ENCODE measurements at regions of chr2 and their contacts with region 1.

Region 1: GRCh38 chr2:234422273-234422767 is 74.6 kb downstream of the ARL4C start:
- DNase-seq: peak; percentile 95
- ATAC-seq: peak; percentile 88
- H3K4me3 ChIP-seq: no peak overlapping the region
- H3K27ac ChIP-seq: peak overlapping the region; percentile 58; the same call in 1 of the 2 replicates
- H3K4me1 ChIP-seq: peaks cover 21% of the 10 kb centered on the region
- H3K27me3 ChIP-seq: no peaks in the 10 kb centered on the region
- CTCF ChIP-seq: no peak
- POLR2A ChIP-seq: no peak
- RAD21 ChIP-seq: 0 out of 2 replicates have a peak, but pooled peaks have one; percentile 17

Region 2: GRCh38 chr2:234377761-234378391 is 44.4 kb before region 1 on chr2:
- CTCF ChIA-PET with region 1: no interaction called
- POLR2A ChIA-PET with region 1: no interaction called
- dilution Hi-C with region 1: no loop called
- in situ Hi-C with region 1: no loop called
- intact Hi-C with region 1: no loop called
- DNase-seq: peak; percentile 74
- ATAC-seq: peak; percentile 76
- H3K4me3 ChIP-seq: no peak overlapping the region
- H3K27ac ChIP-seq: peak overlapping the region; percentile 81; the same call in 1 of the 2 replicates
- H3K4me1 ChIP-seq: peaks cover 4% of the 10 kb centered on the region; the same call in 1 of the 2 replicates
- H3K27me3 ChIP-seq: no peaks in the 10 kb centered on the region
- CTCF ChIP-seq: no peak
- POLR2A ChIP-seq: no peak
- RAD21 ChIP-seq: no peak

Region 3: DNA sequence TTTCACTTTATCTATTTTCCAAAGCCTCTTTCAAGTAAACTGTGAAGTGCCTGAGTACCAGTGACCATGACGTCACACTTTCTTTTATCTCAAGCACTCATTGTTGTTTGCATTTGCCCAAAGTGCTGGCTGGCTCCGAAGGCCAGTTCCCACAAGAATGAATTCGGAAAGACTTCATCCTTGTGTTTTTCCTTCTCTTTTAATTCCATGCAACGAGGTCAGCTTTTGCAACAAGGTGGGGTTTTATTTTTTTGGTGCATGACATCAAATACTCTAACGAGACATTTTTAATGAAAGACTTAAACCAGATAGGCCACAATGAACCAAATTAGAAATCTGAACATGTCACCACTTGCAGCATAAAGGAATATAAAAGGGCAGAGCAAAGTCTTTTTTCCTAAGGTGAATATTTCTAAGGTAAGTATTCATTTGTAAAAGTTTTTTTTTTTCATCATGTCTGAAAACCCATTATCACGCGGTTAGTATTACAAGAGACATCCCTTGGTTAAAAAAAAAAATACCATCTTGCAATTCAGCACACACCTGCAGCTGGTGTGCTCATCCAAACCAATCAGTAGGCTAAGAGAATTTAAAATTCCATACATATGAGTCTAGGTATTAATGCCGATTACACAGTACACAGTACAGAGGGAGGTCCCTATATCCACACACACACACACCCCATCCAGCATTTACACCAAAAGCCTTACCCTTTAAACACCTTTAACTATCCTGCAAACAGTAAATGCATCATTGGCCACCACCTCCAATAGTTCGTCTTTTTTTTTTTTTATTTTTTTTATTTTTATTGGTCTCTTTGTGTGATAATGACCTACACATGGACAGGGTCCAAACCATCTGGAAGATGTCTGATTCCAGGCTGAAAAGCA is 72.3 kb after region 1 on chr2:
- CTCF ChIA-PET with region 1: no interaction called
- POLR2A ChIA-PET with region 1: no interaction called
- dilution Hi-C with region 1: no loop called
- in situ Hi-C with region 1: no loop called
- intact Hi-C with region 1: loop called (anchors 2 kb)
- DNase-seq: peak; percentile 66
- ATAC-seq: no peak
- H3K4me3 ChIP-seq: peak overlapping the region; percentile 84
- H3K27ac ChIP-seq: no peak overlapping the region
- H3K4me1 ChIP-seq: peaks cover 5% of the 10 kb centered on the region
- H3K27me3 ChIP-seq: no peaks in the 10 kb centered on the region
- CTCF ChIP-seq: no peak
- POLR2A ChIP-seq: no peak
- RAD21 ChIP-seq: no peak

Measured in IMR-90 (cell line).